Activated T-helper 2 cell treated with anti-CD3 and anti-CD28 coated beads, Interferon-gamma antibody, Interleukin-2, Interleukin-4, amounts not matched to agents 10 μg/mL and 5 μg/mL and 100 μg/mL, durations not matched to agents 14 hours and 24 hours and 36 hours (primary cell): ENCODE measurements at regions of chr12 and their contacts with region 1.

Region 1: DNA sequence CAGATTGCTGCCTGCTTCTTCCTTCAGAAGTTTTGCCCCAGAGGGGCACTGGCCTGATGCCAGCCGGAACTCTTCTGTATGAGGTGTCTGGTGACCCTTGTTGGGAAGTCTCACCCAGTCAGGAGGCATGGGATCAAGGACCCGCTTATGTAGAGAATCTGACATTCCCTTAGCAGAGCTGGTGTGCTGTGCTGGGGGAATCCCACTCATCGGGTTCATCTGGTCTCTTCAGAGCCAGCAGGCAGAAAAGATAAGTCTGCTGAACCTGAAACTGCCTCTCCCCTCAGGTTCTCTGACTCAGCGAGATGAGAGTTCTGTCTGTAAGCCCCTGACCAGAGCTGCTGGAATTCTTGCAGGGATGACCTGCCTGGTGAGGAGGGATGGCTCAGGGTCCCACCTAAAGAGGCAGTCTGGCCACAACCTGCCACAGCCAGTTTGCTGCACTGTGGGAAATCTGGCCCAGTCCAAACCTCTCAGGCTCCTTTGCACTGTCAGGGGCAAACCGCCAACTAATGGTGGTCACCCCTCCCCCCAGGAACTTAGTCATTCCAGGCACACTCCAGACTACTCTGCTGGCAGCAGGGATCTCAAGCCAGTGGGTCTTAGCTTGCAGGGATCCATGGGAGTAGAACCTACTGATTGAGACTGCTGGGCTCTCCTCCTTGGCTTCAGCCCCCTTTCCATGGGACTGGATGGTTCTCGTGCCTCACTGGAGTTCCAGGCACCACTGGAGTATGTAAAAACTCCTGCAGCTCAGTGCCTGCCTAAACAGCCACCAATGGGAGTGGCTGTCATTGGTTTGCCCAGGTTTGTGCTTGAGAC is 4.1 kb downstream of the CLEC2D start:
- DNase-seq: peak; percentile 48
- H3K4me3 Mint-ChIP-seq: peak overlapping the region; percentile 93
- H3K27ac Mint-ChIP-seq: peak overlapping the region; percentile 97
- H3K4me1 Mint-ChIP-seq: peaks cover 58% of the 10 kb centered on the region
- H3K27me3 Mint-ChIP-seq: no peaks in the 10 kb centered on the region

Region 2: GRCh38 chr12:9634177-9634803 is 39.3 kb before region 1 on chr12:
- intact Hi-C with region 1: loop called (anchors 5 kb)
- DNase-seq: peak; percentile 58
- H3K4me3 Mint-ChIP-seq: no peak overlapping the region
- H3K27ac Mint-ChIP-seq: peak overlapping the region; percentile 13
- H3K4me1 Mint-ChIP-seq: peaks cover 43% of the 10 kb centered on the region
- H3K27me3 Mint-ChIP-seq: peaks cover 2% of the 10 kb centered on the region

Region 3: GRCh38 chr12:9687228-9687627 is 13.6 kb after region 1 on chr12:
- intact Hi-C with region 1: loop called (anchors 1 kb)
- DNase-seq: no peak
- H3K4me3 Mint-ChIP-seq: no peak overlapping the region
- H3K27ac Mint-ChIP-seq: peak overlapping the region; percentile 60
- H3K4me1 Mint-ChIP-seq: peaks cover 55% of the 10 kb centered on the region
- H3K27me3 Mint-ChIP-seq: no peaks in the 10 kb centered on the region

Region 4: DNA sequence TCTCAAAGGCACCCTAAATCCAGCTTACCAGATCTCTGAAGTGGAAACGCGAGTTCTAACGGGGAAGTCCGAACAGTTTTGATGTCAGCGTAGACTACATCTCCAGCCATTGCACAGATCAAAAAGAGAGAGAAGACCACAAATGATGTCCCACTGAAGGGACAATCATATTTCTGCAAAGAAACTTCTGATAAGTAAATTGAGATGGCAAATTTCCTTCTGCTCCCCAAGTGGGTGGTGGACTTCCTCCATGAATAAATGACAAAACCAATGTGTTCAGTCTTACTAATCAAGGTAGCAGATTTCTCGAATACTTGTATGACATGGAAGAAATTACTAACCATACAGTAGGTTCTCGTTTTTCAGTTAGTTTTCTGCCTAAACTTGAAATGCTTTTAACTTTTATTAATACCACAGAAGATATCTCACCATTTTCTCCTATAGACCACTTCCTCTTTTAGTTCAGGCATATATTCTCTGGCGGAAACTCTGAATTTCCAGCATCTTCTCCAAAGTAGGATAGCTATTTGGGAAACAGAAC is 59.4 kb after region 1 on chr12 and contains the start of gene CLECL1:
- intact Hi-C with region 1: loop called (anchors 1 kb)
- DNase-seq: no peak
- H3K4me3 Mint-ChIP-seq: peak within 1 kb of the TSS; percentile 89
- H3K27ac Mint-ChIP-seq: peak within 1 kb of the TSS; percentile 93
- H3K4me1 Mint-ChIP-seq: peaks cover 73% of the 10 kb centered on the region
- H3K27me3 Mint-ChIP-seq: no peaks in the 10 kb centered on the region
- total RNA-seq, gene CLECL1: 16.8 and 17.2 TPM in 2 replicates